ENCODE measurements at regions of chr3 and their contacts with region 1.

Region 1: DNA sequence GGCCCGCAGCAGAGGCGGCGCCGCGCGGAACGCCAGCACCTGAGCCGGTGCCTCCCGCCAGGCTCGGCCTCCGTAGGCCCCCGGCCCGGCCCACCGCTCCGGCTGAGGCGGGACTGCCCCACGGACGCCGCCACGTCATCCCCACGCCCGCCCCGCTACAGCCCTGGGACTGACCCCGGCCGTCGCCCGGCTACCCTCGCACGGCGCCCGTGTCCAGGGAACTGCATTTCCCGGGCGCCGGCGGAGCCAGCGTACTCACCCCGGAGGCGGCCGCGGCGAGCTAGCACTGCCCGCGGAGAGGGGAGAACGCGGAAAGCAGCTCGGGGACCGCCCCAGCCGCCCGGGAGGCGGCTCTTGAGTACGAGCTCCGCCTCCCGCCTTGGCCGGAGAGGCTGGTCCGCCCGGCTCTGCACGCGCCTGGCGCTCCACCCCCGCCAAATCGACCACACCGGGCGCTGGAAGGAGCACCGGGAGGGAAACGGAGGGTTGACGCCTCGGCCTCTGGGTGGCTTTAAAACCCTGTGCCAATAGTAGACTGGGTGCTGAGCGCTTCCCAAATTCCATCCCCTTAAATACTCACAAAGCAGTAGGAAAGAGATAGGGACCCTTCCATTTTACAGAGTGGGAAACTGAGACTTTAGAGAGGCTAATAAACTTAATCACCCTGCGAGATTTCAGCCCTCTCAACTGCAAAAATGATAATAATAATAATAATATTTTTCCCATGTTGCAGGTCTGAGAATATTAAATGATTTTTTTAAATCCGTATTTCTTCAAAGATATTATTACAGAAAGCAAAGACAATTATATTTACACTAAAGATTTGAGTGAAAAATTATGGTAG is at the start of gene B4GALT4:
- DNase-seq: peak; percentile 79
- H3K4me3 Mint-ChIP-seq: peak within 1 kb of the TSS; percentile 79
- H3K27ac Mint-ChIP-seq: peak within 1 kb of the TSS; percentile 78
- H3K4me1 Mint-ChIP-seq: peaks cover 40% of the 10 kb centered on the region
- H3K27me3 Mint-ChIP-seq: no peaks in the 10 kb centered on the region
- total RNA-seq, gene B4GALT4: 10.9 to 11.6 TPM

Region 2: DNA sequence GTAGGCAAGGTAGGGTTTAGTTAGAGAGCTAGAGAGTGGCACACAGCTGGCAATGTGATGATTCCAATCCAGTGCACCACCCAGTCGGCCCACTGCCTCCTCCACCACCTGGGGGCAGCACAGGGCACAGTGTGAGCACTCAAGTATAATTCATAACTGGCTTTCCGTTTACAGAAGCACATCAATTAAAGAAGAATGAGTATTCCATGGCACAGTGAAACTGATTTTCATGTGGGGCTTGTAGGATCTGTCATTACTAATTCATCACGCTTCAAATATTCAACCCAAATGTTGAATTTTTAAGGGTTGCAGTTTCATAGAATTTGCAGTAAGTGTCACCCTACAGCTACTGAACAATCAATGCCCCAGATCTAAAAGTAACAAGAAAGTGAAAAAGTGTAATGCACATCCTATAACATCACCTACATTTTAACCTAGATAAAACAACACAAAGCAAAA is 356.0 kb before region 1 on chr3:
- CTCF ChIA-PET with region 1: interaction called, 59 read pairs
- POLR2A ChIA-PET with region 1: interaction called, 7 read pairs
- DNase-seq: peak; percentile 75
- H3K4me3 Mint-ChIP-seq: no peak overlapping the region
- H3K27ac Mint-ChIP-seq: no peak overlapping the region
- H3K4me1 Mint-ChIP-seq: no peaks in the 10 kb centered on the region
- H3K27me3 Mint-ChIP-seq: peaks cover 30% of the 10 kb centered on the region

Region 3: DNA sequence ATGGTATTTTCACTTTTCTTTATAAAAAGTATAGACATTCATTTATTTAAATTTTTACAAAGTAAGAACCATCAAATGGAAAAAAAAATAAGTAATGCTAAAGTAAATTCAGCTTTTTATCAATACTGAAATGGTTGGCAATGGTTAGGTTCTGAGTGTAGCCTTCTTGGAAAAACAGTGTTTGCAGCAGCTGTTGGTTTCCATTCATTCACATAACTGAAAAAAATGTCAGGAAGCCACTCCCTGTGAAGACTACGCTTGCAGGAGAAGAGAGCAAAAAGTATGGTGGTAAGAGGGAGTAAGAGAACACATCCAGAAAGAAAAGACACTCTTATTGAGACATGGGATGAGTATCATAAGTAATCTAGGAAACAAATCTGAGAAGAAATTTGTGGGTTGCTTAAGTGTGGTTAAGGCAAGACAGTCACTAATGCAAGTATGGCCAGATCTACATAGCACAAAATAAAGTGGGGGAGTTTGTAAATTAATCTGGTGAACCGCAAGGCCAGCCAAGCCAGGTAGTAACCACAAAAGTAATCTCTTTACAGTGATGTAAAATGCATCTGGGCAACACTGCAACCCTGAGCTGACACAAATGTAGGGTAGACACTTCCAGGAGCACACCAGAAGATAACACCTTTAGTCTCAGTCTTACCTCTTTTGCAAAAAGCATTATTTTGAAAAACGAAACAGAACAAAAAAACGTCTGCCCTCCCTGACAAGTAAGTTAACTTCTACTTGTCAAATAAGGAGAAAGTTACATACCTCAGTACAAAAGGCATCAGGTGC is 339.9 kb before region 1 on chr3:
- CTCF ChIA-PET with region 1: no interaction called
- POLR2A ChIA-PET with region 1: no interaction called
- DNase-seq: no peak
- H3K4me3 Mint-ChIP-seq: no peak overlapping the region
- H3K27ac Mint-ChIP-seq: no peak overlapping the region
- H3K4me1 Mint-ChIP-seq: peaks cover 10% of the 10 kb centered on the region
- H3K27me3 Mint-ChIP-seq: peaks cover 14% of the 10 kb centered on the region

Region 4: GRCh38 chr3:119145500-119146191 is 95.2 kb before region 1 on chr3 and contains the start of gene TEX55:
- CTCF ChIA-PET with region 1: interaction called, 52 read pairs
- POLR2A ChIA-PET with region 1: interaction called, 4 read pairs
- DNase-seq: no peak
- H3K4me3 Mint-ChIP-seq: no peak within 1 kb of the TSS
- H3K27ac Mint-ChIP-seq: no peak within 1 kb of the TSS
- H3K4me1 Mint-ChIP-seq: peaks cover 2% of the 10 kb centered on the region
- H3K27me3 Mint-ChIP-seq: no peaks in the 10 kb centered on the region
- total RNA-seq, gene TEX55: not detected

Region 5: GRCh38 chr3:119227070-119227850 is 13.6 kb before region 1 on chr3:
- CTCF ChIA-PET with region 1: interaction called, 19 read pairs
- POLR2A ChIA-PET with region 1: interaction called, 10 read pairs
- DNase-seq: no peak
- H3K4me3 Mint-ChIP-seq: no peak overlapping the region
- H3K27ac Mint-ChIP-seq: no peak overlapping the region
- H3K4me1 Mint-ChIP-seq: peaks cover 4% of the 10 kb centered on the region
- H3K27me3 Mint-ChIP-seq: no peaks in the 10 kb centered on the region

Region 6: GRCh38 chr3:119352849-119353502 is 112.2 kb after region 1 on chr3:
- CTCF ChIA-PET with region 1: interaction called, 10 read pairs
- POLR2A ChIA-PET with region 1: no interaction called
- DNase-seq: no peak
- H3K4me3 Mint-ChIP-seq: no peak overlapping the region
- H3K27ac Mint-ChIP-seq: no peak overlapping the region
- H3K4me1 Mint-ChIP-seq: peaks cover 21% of the 10 kb centered on the region
- H3K27me3 Mint-ChIP-seq: no peaks in the 10 kb centered on the region

Region 7: DNA sequence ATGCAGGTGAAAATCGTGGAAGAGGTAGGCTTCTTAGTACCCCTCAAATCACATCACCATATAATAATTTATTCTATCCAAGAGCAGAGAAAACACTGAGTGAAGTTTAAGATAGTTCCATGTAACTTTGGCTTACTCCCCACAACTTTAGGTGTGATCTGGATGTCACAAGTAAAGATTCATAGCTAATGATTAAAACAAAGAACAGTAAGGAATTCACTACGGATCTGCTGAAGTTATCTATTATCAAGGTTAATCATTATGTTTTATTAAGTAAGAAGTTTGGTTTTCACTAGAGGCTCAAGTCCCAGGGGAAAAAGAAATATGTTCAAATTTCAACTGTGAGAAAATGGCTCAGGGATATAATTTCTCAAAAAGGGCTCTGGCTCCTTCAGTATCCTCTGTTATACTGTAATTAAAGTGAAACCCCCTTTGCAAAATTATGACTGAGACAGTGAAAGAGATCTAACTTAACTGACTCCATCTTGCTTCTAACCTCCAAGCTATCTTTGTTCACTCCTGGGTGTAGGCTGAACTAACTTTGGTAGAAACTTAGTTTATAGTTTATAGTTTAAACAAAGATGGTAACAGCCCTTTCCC is 301.5 kb after region 1 on chr3:
- CTCF ChIA-PET with region 1: no interaction called
- POLR2A ChIA-PET with region 1: no interaction called
- DNase-seq: no peak
- H3K4me3 Mint-ChIP-seq: no peak overlapping the region
- H3K27ac Mint-ChIP-seq: no peak overlapping the region
- H3K4me1 Mint-ChIP-seq: peaks cover 23% of the 10 kb centered on the region
- H3K27me3 Mint-ChIP-seq: no peaks in the 10 kb centered on the region